Aorta (tissue), 5 donors: ENCODE measurements at regions of chr17 and their contacts with region 1.

Region 1: DNA sequence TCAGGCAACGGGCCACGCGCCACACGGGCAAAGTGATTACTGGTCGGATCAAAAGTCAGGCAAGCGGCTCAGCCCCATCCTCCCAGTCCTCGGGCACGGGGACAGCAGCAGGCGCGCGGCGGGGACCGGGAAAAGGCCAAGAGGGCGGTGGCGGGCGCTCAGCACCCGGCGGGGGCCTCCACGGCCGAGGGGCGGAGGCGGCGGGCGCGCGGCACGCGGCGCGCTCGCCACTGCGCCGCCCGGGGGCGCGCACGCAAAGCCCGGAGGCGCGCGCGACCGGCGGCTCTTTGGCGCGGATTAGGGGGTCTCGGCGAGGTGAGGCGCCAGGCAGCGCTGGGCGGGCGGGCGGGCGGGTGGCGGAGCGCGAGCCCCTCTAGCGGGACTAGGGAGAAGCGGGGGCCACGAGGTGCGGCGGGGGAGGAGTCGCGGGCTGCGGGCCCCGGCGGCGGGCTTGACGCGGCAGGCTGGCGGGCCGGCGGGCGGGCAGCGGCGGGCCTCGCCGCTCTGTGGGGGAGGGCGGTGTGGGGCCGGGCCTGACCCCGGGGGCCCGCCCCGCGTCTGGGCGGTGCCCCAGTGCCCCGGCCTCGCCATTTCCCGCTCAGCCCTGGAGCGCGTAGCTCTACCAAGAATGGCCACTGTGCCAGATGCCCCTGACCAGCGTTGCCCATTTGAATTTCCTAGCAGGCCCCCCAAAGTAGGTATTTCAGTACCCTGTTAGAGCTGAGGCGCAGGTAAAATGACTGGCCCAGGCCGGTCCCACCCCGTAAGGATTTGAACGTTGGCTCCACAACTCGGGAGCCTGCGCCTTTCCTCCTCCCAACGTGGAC is at the starts of genes ACACA and TADA2A:
- DNase-seq: peak; percentile 88 to 93
- ATAC-seq: peak; percentile 96
- H3K4me3 ChIP-seq: peak within 1 kb of the TSS; percentile 85 to 96
- H3K27ac ChIP-seq: peak within 1 kb of the TSS; percentile 15 to 54
- H3K4me1 ChIP-seq: no peaks in the 10 kb centered on the region
- H3K27me3 ChIP-seq: no peaks in the 10 kb centered on the region
- total RNA-seq, gene ACACA: 31.6 to 49.9 TPM
- total RNA-seq, gene TADA2A: 23.4 to 25.6 TPM

Region 2: GRCh38 chr17:37358830-37359681 is 47.8 kb before region 1 on chr17:
- intact Hi-C with region 1: loop called in 1 of 2 experiments (anchors 2 kb)
- DNase-seq: peak; percentile 96 to 98
- ATAC-seq: peak; percentile 97
- H3K4me3 ChIP-seq: peak overlapping the region; percentile 79 to 80
- H3K27ac ChIP-seq: peak overlapping the region; percentile 57 to 93
- H3K4me1 ChIP-seq: peaks cover 0 to 3% of the 10 kb centered on the region in 2 donors
- H3K27me3 ChIP-seq: no peaks in the 10 kb centered on the region

Region 3: GRCh38 chr17:37489197-37490001 is 82.6 kb after region 1 on chr17 and contains the start of gene DUSP14:
- intact Hi-C with region 1: loop called (anchors 5 kb)
- DNase-seq: peak; percentile 77 to 94
- ATAC-seq: peak; percentile 91
- H3K4me3 ChIP-seq: peak within 1 kb of the TSS; percentile 70 to 92
- H3K27ac ChIP-seq: peak within 1 kb of the TSS in 1 of 2 donors; percentile 58
- H3K4me1 ChIP-seq: peaks cover 0 to 2% of the 10 kb centered on the region in 2 donors
- H3K27me3 ChIP-seq: no peaks in the 10 kb centered on the region
- total RNA-seq, gene DUSP14: 9.2 to 9.7 TPM